Body of pancreas (tissue), 4 donors: ENCODE measurements at regions of chr9 and their contacts with region 1.

Region 1: GRCh38 chr9:91689006-91689405 is 261.0 kb downstream of the ROR2 start:
- DNase-seq: no peak
- ATAC-seq: no peak
- H3K4me3 ChIP-seq: no peak overlapping the region
- H3K27ac ChIP-seq: no peak overlapping the region
- H3K4me1 ChIP-seq: no peaks in the 10 kb centered on the region
- H3K27me3 ChIP-seq: no peaks in the 10 kb centered on the region
- CTCF ChIP-seq: no peak
- POLR2A ChIP-seq: no peak

Region 2: DNA sequence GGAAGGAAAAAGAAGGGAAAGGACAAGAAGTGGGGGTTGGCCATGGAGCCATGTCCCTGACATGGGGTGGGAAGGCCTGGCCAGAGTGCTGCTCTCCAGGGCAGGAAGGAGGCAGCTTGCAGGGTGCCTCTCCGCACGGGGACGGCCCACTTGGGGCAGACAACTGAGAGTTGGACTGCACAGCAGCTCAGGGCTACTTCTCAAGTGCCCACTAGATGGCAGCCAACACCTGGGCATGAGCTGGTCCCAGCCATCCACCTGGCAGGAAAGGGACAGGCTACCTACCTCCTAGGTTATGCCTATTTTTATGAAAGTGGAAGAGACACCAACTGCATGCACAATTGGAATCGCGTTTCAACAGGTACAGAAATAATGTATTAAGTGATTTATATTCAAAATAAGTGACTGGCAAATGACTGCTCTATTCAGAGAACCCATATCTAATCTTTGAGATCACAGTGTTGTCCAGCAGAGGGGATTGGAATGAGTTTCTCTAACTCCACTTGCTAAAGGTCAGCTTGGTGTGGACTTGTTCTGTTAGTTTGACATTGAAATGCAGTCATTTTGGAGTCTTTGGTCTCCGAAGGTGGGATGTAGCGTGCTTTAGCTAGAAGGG is 774.0 kb before region 1 on chr9:
- intact Hi-C with region 1: loop called (anchors 5 kb)
- DNase-seq: peak; percentile 78 to 84 (median 80)
- ATAC-seq: peak; percentile 91
- H3K4me3 ChIP-seq: no peak overlapping the region
- H3K27ac ChIP-seq: no peak overlapping the region
- H3K4me1 ChIP-seq: no peaks in the 10 kb centered on the region
- H3K27me3 ChIP-seq: no peaks in the 10 kb centered on the region
- CTCF ChIP-seq: peak; percentile 85 to 97 (median 96)
- POLR2A ChIP-seq: no peak

Region 3: DNA sequence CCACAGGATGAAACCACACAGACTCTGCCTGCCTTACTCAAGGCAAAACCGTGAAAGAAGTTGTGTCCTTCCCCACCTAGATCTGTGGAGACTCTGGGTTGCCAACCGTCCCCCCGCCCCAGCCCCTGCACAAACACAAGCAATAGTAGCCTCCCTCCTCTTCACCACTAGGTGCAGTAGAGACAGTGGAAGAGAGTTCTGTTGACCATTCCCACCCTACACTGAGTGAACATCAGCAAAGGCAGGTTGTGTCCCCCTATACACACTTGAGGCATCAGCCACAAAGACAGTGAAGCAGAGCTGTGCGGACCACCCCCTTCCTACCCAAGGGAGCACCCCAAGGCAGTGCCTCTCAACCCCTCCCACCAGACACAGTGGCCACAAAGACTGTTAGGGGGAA is 41.6 kb before region 1 on chr9:
- intact Hi-C with region 1: no loop called
- DNase-seq: no peak
- ATAC-seq: no peak
- H3K4me3 ChIP-seq: no peak overlapping the region
- H3K27ac ChIP-seq: no peak overlapping the region
- H3K4me1 ChIP-seq: no peaks in the 10 kb centered on the region
- H3K27me3 ChIP-seq: no peaks in the 10 kb centered on the region
- CTCF ChIP-seq: no peak
- POLR2A ChIP-seq: no peak